ENCODE measurements at regions of chr4 and their contacts with region 1.

Region 1: GRCh38 chr4:26860157-26860921 is at the start of gene STIM2:
- DNase-seq: peak; percentile 96 to 100 (median 99)
- H3K4me3 ChIP-seq: peak within 1 kb of the TSS; percentile 88 to 94
- H3K4me3 Mint-ChIP-seq: peak within 1 kb of the TSS; percentile 94 to 100 (median 98)
- H3K27ac ChIP-seq: peak within 1 kb of the TSS; percentile 89
- H3K27ac Mint-ChIP-seq: peak within 1 kb of the TSS; percentile 98 to 100 (median 99)
- H3K4me1 ChIP-seq: peaks cover 61% of the 10 kb centered on the region
- H3K4me1 Mint-ChIP-seq: peaks cover 43 to 81% (median 54%) of the 10 kb centered on the region in 4 donors
- H3K27me3 ChIP-seq: no peaks in the 10 kb centered on the region
- H3K27me3 Mint-ChIP-seq: peaks cover 0 to 1% of the 10 kb centered on the region in 2 donors
- total RNA-seq, gene STIM2: 84.6 to 91.7 TPM

Region 2: GRCh38 chr4:25862411-25863346 is 997.7 kb before region 1 on chr4 and contains the start of gene SEL1L3:
- CTCF ChIA-PET with region 1: no interaction called
- POLR2A ChIA-PET with region 1: no interaction called
- intact Hi-C with region 1: loop called (anchors 5 kb)
- DNase-seq: peak; percentile 31 to 54 (median 43)
- H3K4me3 ChIP-seq: peak within 1 kb of the TSS; percentile 71 to 74
- H3K4me3 Mint-ChIP-seq: peak within 1 kb of the TSS; percentile 95 to 100 (median 98)
- H3K27ac ChIP-seq: peak within 1 kb of the TSS; percentile 87
- H3K27ac Mint-ChIP-seq: peak within 1 kb of the TSS; percentile 92 to 99 (median 94)
- H3K4me1 ChIP-seq: peaks cover 48% of the 10 kb centered on the region
- H3K4me1 Mint-ChIP-seq: peaks cover 33 to 50% (median 41%) of the 10 kb centered on the region in 4 donors
- H3K27me3 ChIP-seq: no peaks in the 10 kb centered on the region
- H3K27me3 Mint-ChIP-seq: no peaks in the 10 kb centered on the region
- total RNA-seq, gene SEL1L3: 61.4 to 64.3 TPM

Region 3: DNA sequence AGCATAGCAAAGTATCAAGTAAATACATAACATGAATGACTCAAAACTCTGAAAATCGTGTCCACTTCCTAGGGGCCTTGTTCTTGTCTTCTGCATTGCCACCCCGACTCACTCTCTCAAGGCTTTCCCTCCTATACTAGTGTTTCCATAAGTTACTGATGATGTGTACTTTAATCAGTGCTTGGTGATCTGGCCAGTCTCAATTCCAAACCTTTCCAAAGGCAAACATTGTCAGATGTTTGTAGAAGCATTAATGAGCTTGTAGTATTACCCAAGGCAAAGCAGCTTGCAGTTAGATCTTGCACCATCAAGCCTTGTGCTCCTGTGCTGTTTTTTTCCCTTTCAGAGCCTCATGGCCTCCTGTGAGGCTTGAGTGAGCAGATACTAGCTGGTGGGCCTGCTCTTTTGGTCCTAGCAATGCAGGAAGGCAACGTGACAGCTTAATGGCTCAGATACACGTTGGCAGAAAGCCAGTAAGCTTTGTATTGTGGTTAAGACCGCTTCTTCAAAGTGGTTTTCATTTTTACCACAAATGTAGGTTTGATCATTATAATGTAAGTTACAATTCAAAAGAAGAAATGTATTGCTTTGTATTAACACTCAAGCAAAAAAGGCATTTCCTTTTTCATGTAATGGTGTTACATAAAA is 487.7 kb before region 1 on chr4:
- CTCF ChIA-PET with region 1: no interaction called
- POLR2A ChIA-PET with region 1: no interaction called
- intact Hi-C with region 1: loop called (anchors 5 kb)
- DNase-seq: peak; percentile 70 to 77 (median 73)
- H3K4me3 ChIP-seq: no peak overlapping the region
- H3K4me3 Mint-ChIP-seq: peak overlapping the region in 6 of 8 donors; percentile 11 to 73 (median 41)
- H3K27ac ChIP-seq: no peak overlapping the region
- H3K27ac Mint-ChIP-seq: peak overlapping the region in 4 of 7 donors; percentile 19 to 65 (median 44)
- H3K4me1 ChIP-seq: peaks cover 30% of the 10 kb centered on the region
- H3K4me1 Mint-ChIP-seq: peaks cover 29 to 63% (median 38%) of the 10 kb centered on the region in 4 donors
- H3K27me3 ChIP-seq: no peaks in the 10 kb centered on the region
- H3K27me3 Mint-ChIP-seq: no peaks in the 10 kb centered on the region

Region 4: DNA sequence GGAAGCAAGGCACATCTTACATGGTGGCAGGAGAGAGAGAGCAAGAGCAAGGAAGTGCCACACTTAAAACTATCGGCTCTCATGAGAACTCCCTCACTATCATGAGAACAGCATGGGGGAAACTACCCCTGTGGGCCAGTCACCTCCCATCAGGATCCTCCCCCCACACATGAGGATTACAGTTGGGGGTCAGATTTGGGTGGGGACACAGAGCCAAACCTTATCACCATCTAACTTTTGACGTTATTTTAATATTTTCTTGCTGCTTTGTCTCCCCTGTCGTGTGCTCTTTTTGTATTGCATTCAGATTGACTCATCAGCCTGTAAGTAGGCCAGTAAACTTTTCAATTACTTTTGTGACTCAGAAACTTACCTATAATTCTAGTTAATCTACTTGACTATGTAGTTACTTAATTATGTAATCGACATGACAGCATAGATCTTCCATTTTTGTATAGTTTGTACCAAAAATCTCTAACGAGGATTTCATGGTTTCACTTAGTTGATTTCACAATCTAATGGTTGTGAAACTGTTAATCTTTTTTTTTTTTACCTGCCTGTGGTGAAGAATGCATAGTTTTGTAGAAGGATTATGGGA is 18.6 kb after region 1 on chr4:
- CTCF ChIA-PET with region 1: interaction called, 49 read pairs
- POLR2A ChIA-PET with region 1: interaction called, 250 read pairs
- intact Hi-C with region 1: loop called (anchors 1 kb)
- DNase-seq: peak in 3 of 5 donors; percentile 23 to 75 (median 28)
- H3K4me3 ChIP-seq: peak overlapping the region in 1 of 2 donors; percentile 25
- H3K4me3 Mint-ChIP-seq: peak overlapping the region; percentile 22 to 87 (median 75)
- H3K27ac ChIP-seq: peak overlapping the region; percentile 56
- H3K27ac Mint-ChIP-seq: peak overlapping the region; percentile 90 to 98 (median 96)
- H3K4me1 ChIP-seq: peaks cover 88% of the 10 kb centered on the region
- H3K4me1 Mint-ChIP-seq: peaks cover 64 to 81% (median 70%) of the 10 kb centered on the region in 4 donors
- H3K27me3 ChIP-seq: no peaks in the 10 kb centered on the region
- H3K27me3 Mint-ChIP-seq: no peaks in the 10 kb centered on the region

Region 5: DNA sequence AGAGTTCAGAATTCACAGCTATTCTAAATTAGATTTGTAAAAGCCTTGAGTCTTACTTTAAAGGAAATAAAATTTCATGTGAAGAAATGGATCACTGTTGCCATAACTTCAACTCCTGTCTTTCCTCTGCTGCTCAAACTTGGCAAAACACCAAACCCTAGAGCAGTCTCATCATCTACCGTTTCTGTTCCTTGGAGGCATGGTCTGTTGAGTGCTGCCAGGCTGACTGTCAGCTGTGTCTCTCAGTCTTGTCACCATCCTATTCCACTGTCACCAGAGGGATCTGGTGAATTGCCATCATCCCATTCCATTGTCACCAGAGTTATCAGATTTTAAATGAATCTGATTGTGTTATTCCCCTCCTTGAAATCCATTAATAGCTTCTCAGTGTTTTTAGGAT is 55.9 kb after region 1 on chr4:
- CTCF ChIA-PET with region 1: interaction called, 3 read pairs
- POLR2A ChIA-PET with region 1: interaction called, 8 read pairs
- intact Hi-C with region 1: loop called (anchors 10 kb)
- DNase-seq: no peak
- H3K4me3 ChIP-seq: no peak overlapping the region
- H3K4me3 Mint-ChIP-seq: peak overlapping the region in 4 of 8 donors; percentile 11 to 50 (median 28)
- H3K27ac ChIP-seq: no peak overlapping the region
- H3K27ac Mint-ChIP-seq: peak overlapping the region in 6 of 7 donors; percentile 17 to 78 (median 50)
- H3K4me1 ChIP-seq: peaks cover 55% of the 10 kb centered on the region
- H3K4me1 Mint-ChIP-seq: peaks cover 38 to 82% (median 57%) of the 10 kb centered on the region in 4 donors
- H3K27me3 ChIP-seq: no peaks in the 10 kb centered on the region
- H3K27me3 Mint-ChIP-seq: no peaks in the 10 kb centered on the region

Region 6: GRCh38 chr4:27010334-27010940 is 150.1 kb after region 1 on chr4:
- CTCF ChIA-PET with region 1: interaction called, 7 read pairs
- POLR2A ChIA-PET with region 1: interaction called, 24 read pairs
- intact Hi-C with region 1: loop called (anchors 2 kb)
- DNase-seq: peak; percentile 50 to 59 (median 57)
- H3K4me3 ChIP-seq: no peak overlapping the region
- H3K4me3 Mint-ChIP-seq: no peak overlapping the region
- H3K27ac ChIP-seq: no peak overlapping the region
- H3K27ac Mint-ChIP-seq: peak overlapping the region in 6 of 7 donors; percentile 4 to 69 (median 63)
- H3K4me1 ChIP-seq: no peaks in the 10 kb centered on the region
- H3K4me1 Mint-ChIP-seq: peaks cover 4 to 17% (median 11%) of the 10 kb centered on the region in 4 donors
- H3K27me3 ChIP-seq: no peaks in the 10 kb centered on the region
- H3K27me3 Mint-ChIP-seq: no peaks in the 10 kb centered on the region

Measured in CD4-positive, alpha-beta memory T cell (primary cell).